Gastrocnemius medialis (tissue), 4 donors: ENCODE measurements at regions of chr6 and their contacts with region 1.

Region 1: DNA sequence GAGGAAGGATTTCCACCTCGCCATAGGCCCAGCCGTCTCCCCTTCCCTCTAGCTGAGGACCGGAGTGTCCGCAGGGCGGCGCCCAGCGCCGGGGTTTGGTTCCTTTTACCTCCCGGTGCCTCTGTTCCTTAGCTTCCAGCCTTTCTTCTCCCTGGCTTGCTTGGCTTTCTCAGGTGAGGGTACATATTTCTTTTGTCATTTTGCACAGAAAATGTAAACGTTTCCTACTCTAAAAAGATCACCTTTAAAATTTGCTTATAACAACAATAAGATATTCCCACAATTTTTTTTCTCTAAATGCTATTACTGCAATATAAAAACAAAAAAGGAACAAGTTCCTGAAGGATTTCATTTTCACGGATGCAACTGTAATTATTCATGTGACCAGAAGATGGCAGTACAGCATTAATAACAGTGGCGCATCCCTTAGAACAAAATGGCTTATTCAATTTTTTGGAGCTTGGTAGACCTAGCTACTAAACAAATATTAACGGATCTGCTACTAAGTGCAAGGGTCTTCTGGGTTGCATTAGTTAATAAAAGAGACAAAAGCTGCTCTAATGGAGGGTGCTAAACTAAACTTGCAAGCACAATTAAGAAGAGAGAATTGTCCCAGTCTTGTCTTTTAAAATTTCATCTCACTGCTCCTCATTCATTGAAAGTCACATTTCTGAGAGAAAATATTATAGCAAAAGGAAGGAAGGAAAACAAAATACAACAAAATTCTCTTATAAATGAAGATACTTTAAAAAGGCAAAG is 172.9 kb downstream of the ADGRG6 start:
- DNase-seq: no peak
- ATAC-seq: no peak
- H3K4me3 ChIP-seq: no peak overlapping the region
- H3K27ac ChIP-seq: no peak overlapping the region
- H3K4me1 ChIP-seq: no peaks in the 10 kb centered on the region
- H3K27me3 ChIP-seq: no peaks in the 10 kb centered on the region
- CTCF ChIP-seq: peak; percentile 48 to 78 (median 75)
- POLR2A ChIP-seq: no peak

Region 2: DNA sequence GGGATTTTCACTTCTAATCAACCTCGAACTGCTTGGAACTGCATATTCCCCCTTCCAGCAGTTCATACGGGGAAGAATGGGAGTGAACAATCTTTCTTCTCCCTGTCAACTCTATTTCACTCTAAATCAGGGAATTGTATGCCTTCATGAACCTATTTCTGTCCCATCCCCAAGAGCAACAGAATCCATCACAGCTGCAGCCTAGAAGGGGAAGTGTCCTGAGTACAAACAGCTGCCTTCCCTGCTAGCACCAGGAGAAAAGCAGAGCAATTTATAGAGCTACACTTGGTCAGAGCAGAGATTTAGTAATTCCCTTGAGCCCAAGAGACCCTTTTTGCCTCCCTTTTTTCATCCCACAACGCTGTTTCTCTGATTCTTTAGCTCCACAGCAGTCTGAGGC is 35.5 kb after region 1 on chr6:
- in situ Hi-C with region 1: no loop called
- intact Hi-C with region 1: no loop called
- DNase-seq: no peak
- ATAC-seq: no peak
- H3K4me3 ChIP-seq: no peak overlapping the region
- H3K27ac ChIP-seq: no peak overlapping the region
- H3K4me1 ChIP-seq: no peaks in the 10 kb centered on the region
- H3K27me3 ChIP-seq: no peaks in the 10 kb centered on the region
- CTCF ChIP-seq: no peak
- POLR2A ChIP-seq: no peak

Region 3: DNA sequence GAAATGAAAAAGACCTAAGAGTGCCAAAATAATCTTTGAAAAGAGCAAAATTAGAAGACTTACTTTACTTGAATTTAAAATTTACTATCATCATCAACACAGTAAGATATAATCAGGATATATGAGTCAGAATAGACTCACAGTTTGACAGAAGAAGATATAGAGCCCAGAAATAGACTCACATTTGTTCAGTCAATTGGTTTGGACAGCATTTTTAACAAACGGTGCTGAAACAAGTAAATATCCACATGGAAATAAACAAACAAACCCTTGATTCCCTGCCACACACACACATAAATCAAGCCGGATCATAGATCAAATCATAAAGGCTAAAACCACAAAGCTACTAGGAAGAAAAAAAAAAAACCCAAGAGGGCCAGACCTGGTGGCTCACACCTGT is 118.2 kb after region 1 on chr6:
- in situ Hi-C with region 1: no loop called
- intact Hi-C with region 1: no loop called
- DNase-seq: no peak
- ATAC-seq: no peak
- H3K4me3 ChIP-seq: no peak overlapping the region
- H3K27ac ChIP-seq: no peak overlapping the region
- H3K4me1 ChIP-seq: no peaks in the 10 kb centered on the region
- H3K27me3 ChIP-seq: no peaks in the 10 kb centered on the region
- CTCF ChIP-seq: no peak
- POLR2A ChIP-seq: no peak

Region 4: GRCh38 chr6:143400258-143401067 is 925.8 kb after region 1 on chr6:
- in situ Hi-C with region 1: loop called in 1 of 4 experiments (anchors 25 kb)
- intact Hi-C with region 1: no loop called
- DNase-seq: no peak
- ATAC-seq: no peak
- H3K4me3 ChIP-seq: no peak overlapping the region
- H3K27ac ChIP-seq: no peak overlapping the region
- H3K4me1 ChIP-seq: peaks cover 0 to 4% of the 10 kb centered on the region in 2 donors
- H3K27me3 ChIP-seq: peaks cover 0 to 7% (median 0%) of the 10 kb centered on the region in 3 donors
- CTCF ChIP-seq: no peak
- POLR2A ChIP-seq: no peak

Region 5: DNA sequence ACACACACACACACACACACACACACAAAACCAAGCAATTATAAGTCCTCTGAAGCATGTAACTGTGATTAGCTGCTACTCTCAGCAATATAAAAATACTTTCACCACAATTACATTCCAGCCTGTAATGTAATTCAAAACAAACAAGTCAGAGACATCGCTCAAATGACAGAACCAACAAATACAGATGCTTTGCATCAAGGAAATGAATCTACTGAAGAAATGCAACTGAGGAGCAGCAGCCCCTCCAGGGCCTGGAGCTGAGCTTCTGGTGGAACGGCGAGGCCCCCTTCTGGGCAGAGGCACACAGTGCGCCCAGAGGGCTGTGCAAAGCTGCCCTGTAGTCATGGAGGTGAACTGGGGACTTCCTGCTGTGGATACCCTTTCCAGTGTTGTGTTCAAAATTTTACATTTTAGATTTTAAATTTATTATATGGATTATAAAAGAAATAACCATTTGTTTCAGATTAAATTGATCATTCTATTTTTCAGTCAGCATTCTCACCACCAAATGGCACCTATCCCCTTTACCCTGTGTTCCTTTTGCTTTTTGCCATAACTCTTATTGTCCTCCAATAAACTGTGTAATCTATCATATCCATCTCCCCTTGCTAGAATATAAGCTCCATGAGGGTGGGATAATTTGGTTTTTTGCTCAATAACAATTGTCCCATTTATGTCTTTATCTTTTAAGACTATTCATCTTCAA is 952.6 kb after region 1 on chr6:
- in situ Hi-C with region 1: loop called in 1 of 4 experiments (anchors 25 kb)
- intact Hi-C with region 1: loop called (anchors 5 kb)
- DNase-seq: peak; percentile 10 to 31
- ATAC-seq: peak; percentile 30 to 56
- H3K4me3 ChIP-seq: no peak overlapping the region
- H3K27ac ChIP-seq: no peak overlapping the region
- H3K4me1 ChIP-seq: no peaks in the 10 kb centered on the region
- H3K27me3 ChIP-seq: no peaks in the 10 kb centered on the region
- CTCF ChIP-seq: peak; percentile 43 to 86 (median 76)
- POLR2A ChIP-seq: no peak